ENCODE measurements at regions of chrX and their contacts with region 1.

Region 1: DNA sequence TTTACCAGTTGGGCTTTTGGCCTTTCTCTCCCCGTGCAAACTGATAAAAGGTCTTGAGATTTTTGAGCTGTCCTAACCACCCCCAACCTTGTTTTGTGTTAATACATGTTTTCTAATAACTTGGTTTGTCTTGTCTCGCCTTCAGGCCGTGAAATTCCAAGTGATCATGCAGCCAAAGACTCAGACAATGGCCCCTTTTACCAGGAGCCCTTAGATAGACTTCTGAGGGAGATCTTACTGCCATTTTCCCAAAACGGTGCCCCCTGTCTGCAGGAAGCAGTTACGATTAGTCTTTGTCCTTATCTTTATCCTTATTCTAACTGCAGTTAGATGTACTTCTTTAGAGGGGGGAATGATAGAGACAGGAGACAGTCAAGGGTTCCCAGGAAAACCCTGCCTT is 245.3 kb upstream of the HDX start:
- DNase-seq: no peak
- H3K4me3 ChIP-seq: no peak overlapping the region
- H3K27ac ChIP-seq: no peak overlapping the region
- H3K4me1 ChIP-seq: no peaks in the 10 kb centered on the region
- H3K27me3 ChIP-seq: peaks cover 11% of the 10 kb centered on the region
- CTCF ChIP-seq: no peak
- POLR2A ChIP-seq: no peak

Region 2: GRCh38 chrX:84933935-84934556 is 186.5 kb after region 1 on chrX:
- intact Hi-C with region 1: no loop called
- DNase-seq: no peak
- H3K4me3 ChIP-seq: no peak overlapping the region
- H3K27ac ChIP-seq: no peak overlapping the region
- H3K4me1 ChIP-seq: no peaks in the 10 kb centered on the region
- H3K27me3 ChIP-seq: peaks cover 6% of the 10 kb centered on the region
- CTCF ChIP-seq: no peak
- POLR2A ChIP-seq: no peak

Region 3: DNA sequence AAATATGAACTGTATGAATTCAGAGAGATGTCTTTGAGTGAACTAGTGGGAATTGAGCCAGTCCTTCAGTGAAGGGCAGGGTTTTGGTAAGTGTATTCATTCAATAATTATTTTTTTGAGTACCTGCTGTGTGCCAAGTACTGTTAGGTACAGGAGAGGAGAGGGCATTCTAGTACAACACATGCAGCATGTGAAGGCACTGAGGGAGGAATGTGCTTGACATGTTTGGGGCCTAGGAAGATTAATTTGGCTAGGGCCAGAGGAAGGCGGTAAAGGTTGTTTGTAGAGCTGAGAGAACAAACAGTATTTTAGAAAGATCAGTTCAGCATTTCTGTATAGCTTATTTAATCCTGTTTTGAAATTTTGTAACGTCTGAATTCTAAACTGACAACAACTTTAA is 284.0 kb after region 1 on chrX:
- intact Hi-C with region 1: loop called in 1 of 2 experiments (anchors 10 kb)
- DNase-seq: no peak
- H3K4me3 ChIP-seq: no peak overlapping the region
- H3K27ac ChIP-seq: no peak overlapping the region
- H3K4me1 ChIP-seq: no peaks in the 10 kb centered on the region
- H3K27me3 ChIP-seq: no peaks in the 10 kb centered on the region
- CTCF ChIP-seq: no peak
- POLR2A ChIP-seq: no peak